Sciatic nerve (tissue), 2 donors: ENCODE measurements at regions of chr16 and their contacts with region 1.

Region 1: DNA sequence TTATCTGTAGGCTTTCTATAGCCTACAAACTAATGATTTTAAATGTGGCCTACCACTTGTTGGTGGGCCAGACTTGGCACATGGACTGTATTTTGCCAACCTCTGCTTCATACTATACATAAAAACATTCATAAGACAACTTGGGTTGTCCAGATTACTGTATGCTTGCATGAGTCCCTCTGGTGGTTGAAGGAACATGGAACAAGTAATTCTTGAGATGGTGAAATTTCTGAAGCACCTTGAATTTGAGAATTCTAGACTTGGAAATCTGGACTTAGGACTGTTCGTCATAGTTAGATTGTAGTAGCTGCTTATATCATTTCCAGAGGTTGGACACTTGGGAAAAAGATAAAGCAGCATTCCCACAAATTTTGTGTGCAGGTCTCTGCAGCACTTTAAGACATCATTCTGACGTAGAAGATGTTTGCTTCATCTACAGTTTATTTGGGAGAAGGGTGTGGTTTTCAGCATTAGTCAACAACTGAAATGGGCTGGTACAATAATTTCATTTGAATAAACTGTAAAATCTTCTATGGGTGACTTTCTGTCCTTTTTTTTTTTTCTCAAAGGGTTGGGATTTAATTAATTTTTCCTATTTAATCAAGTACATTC is 31.2 kb downstream of the NFATC3 start:
- DNase-seq: no peak
- ATAC-seq: no peak

Region 2: GRCh38 chr16:68776821-68777351 is 660.5 kb after region 1 on chr16:
- intact Hi-C with region 1: loop called (anchors 5 kb)
- DNase-seq: no peak
- ATAC-seq: no peak